Common myeloid progenitor, CD34-positive (primary cell): ENCODE measurements at regions of chr3 and their contacts with region 1.

Region 1: GRCh38 chr3:179184826-179185225 is 36.7 kb downstream of the PIK3CA start:
- DNase-seq: no peak
- H3K4me3 ChIP-seq: no peak overlapping the region
- H3K27ac ChIP-seq: no peak overlapping the region
- H3K4me1 ChIP-seq: peaks cover 10 to 31% (median 16%) of the 10 kb centered on the region in 4 experiments
- H3K27me3 ChIP-seq: no peaks in the 10 kb centered on the region

Region 2: DNA sequence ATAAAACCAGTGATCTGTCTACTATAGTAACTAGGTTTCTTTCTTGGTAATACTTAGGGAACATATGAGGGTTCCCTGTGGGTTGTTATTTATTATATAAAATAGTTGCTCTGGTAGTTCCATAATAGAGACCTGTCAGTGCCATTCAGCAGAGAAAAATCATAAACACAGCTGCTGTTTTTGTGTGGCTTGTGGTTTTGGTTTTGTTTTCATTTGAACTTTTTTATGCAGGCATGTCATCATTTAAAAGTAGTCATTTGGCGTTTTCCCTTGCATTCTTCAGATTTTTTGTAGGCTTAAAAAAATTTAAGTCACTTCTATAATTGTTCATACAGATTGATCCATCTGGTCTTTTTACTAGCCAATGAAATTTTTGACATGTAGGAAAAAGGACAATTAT is 11.3 kb after region 1 on chr3:
- CTCF ChIA-PET with region 1: interaction called, 10 read pairs
- POLR2A ChIA-PET with region 1: no interaction called
- DNase-seq: peak; percentile 28 to 84 (median 79)
- H3K4me3 ChIP-seq: no peak overlapping the region
- H3K27ac ChIP-seq: no peak overlapping the region
- H3K4me1 ChIP-seq: peaks cover 0 to 13% (median 6%) of the 10 kb centered on the region in 4 experiments
- H3K27me3 ChIP-seq: no peaks in the 10 kb centered on the region

Region 3: DNA sequence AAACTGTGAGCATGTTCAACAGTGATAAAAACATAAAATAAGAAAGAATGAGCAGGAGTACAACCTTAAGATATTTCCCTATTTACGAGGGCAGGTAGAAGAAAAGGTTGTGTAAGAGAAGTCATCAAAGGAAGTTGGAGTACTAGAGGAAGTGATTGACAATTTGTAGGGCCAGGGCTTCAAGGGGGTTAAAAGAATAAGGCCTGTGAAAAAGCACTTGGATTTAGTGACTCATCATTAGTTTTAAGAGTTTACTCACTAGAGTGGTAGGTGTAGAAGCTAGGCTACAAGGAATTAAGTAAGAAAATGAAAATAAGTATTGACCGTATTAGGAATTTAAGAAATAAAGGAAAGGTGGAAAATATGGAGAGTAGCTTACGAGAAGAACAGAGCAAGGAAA is 42.5 kb after region 1 on chr3:
- CTCF ChIA-PET with region 1: no interaction called
- POLR2A ChIA-PET with region 1: no interaction called
- DNase-seq: no peak
- H3K4me3 ChIP-seq: no peak overlapping the region
- H3K27ac ChIP-seq: no peak overlapping the region
- H3K4me1 ChIP-seq: no peaks in the 10 kb centered on the region
- H3K27me3 ChIP-seq: no peaks in the 10 kb centered on the region